Right ventricle myocardium inferior (tissue), 1 donor: ENCODE measurements at regions of chr14 and their contacts with region 1.

Region 1: DNA sequence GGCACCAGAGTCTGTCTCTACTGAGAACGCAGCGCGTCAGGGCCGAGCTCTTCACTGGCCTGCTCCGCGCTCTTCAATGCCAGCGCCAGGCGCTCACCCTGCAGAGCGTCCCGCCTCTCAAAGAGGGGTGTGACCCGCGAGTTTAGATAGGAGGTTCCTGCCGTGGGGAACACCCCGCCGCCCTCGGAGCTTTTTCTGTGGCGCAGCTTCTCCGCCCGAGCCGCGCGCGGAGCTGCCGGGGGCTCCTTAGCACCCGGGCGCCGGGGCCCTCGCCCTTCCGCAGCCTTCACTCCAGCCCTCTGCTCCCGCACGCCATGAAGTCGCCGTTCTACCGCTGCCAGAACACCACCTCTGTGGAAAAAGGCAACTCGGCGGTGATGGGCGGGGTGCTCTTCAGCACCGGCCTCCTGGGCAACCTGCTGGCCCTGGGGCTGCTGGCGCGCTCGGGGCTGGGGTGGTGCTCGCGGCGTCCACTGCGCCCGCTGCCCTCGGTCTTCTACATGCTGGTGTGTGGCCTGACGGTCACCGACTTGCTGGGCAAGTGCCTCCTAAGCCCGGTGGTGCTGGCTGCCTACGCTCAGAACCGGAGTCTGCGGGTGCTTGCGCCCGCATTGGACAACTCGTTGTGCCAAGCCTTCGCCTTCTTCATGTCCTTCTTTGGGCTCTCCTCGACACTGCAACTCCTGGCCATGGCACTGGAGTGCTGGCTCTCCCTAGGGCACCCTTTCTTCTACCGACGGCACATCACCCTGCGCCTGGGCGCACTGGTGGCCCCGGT is at the start of gene PTGDR:
- DNase-seq: peak; percentile 75
- ATAC-seq: peak; percentile 33
- total RNA-seq, gene PTGDR: 0.89 TPM

Region 2: DNA sequence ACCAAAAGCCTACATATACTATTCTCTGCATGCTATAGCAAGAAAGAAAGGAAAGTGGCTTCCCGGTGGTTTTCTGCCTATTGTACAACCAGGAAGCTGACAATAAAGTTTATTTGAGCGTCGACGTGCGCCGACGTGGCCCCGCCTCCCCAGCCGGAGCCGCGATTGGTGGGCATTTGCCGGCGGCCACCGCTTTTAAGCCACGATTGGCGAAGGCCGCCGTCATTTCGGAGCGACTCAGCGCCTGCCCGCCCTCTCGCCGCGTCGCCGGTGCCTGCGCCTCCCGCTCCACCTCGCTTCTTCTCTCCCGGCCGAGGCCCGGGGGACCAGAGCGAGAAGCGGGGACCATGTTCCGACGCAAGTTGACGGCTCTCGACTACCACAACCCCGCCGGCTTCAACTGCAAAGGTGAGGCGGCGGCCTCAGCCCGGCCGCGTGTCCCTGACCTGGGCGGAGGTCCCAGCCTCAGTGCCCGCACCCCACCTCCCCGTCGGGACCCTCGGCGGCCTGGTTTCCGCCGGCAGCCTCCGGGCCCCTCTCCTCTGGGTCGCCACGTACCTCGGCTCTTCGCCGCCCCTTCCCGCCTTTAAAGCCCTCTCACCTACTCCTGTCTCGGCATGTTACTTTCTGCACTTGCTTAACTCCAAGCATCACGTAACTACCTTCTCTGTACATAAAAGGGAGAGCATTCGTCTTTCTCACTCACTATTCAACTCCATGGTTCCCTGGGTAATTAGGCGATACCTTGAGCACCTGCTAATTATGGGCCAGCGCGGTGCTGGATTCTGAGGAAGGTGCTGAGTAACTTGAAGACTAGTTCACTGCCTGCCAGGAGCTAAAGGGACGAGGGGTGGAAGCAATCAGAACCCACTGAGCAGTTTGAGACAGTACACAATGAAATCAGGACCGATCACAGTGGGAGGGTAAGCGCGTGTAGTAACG is 278.1 kb before region 1 on chr14 and contains the start of gene RTRAF:
- intact Hi-C with region 1: loop called (anchors 10 kb)
- DNase-seq: peak; percentile 98
- ATAC-seq: peak; percentile 99
- total RNA-seq, gene RTRAF: 276 TPM

Region 3: DNA sequence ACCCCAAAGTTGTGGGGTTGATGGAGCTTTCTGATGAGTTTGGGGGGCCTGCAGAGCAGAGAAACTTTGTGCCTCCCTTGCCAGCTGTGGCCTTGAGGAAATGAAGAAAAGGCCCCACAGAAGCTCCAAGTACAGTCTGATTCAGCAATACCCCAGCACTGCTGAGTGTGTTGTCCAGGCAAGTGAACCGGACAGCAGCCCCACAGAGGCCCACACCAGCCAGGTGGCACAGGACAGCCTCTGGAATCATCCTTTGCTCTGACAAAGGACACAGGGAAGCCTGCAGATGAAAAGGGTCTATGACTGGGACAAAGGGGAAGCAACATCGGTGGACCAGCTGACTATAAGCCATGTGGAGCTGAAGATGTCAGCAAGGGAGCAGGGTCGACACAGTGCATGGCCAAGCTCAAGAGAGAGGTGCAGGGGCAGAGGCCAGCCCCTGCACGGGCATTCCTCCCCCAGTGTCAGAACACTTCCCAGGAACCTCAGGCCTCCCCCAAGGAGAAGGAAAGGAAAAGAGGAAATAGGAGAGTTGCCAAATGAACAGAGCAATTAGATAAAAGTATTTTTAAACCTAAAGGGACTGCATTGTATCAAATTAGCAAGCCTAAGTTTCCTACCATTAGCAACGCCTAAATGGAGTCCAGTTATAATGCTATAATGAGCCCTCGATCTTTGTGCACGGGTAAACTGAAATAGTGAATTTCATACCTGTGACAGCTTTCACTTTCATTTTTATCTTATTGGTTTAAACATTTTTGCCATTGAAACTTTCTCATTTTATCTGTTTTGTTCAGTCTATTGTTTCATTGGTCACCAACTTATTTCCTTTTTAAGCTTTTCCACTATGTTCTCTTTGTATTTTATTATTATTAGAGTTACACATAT is 46.5 kb before region 1 on chr14:
- intact Hi-C with region 1: no loop called
- DNase-seq: no peak
- ATAC-seq: no peak